ENCODE measurements at regions of chr15 and their contacts with region 1.

Region 1: GRCh38 chr15:57861036-57861638 is 154.6 kb downstream of the POLR2M start:
- DNase-seq: peak; percentile 28 to 74
- ATAC-seq: peak; percentile 28 to 78; a peak in 3 of 6 replicates
- H3K4me3 ChIP-seq: no peak overlapping the region
- H3K27ac ChIP-seq: no peak overlapping the region
- H3K4me1 ChIP-seq: no peaks in the 10 kb centered on the region
- CTCF ChIP-seq: peak; percentile 94
- EP300 ChIP-seq: no peak
- POLR2A ChIP-seq: no peak
- RAD21 ChIP-seq: peak; percentile 63 to 73

Region 2: GRCh38 chr15:57580866-57581265 is 280.3 kb before region 1 on chr15:
- CTCF ChIA-PET with region 1: no interaction called
- POLR2A ChIA-PET with region 1: no interaction called
- DNase-seq: no peak
- ATAC-seq: peak in 1 of 2 experiments; percentile 60; a peak in 2 of 6 replicates
- H3K4me3 ChIP-seq: no peak overlapping the region
- H3K27ac ChIP-seq: no peak overlapping the region
- H3K4me1 ChIP-seq: no peaks in the 10 kb centered on the region
- CTCF ChIP-seq: no peak
- EP300 ChIP-seq: no peak
- POLR2A ChIP-seq: no peak
- RAD21 ChIP-seq: no peak

Region 3: GRCh38 chr15:57732526-57733331 is 128.4 kb before region 1 on chr15:
- CTCF ChIA-PET with region 1: interaction called, 14 read pairs
- POLR2A ChIA-PET with region 1: no interaction called
- DNase-seq: peak; percentile 46 to 64
- ATAC-seq: peak; percentile 81 to 93
- H3K4me3 ChIP-seq: no peak overlapping the region
- H3K27ac ChIP-seq: no peak overlapping the region
- H3K4me1 ChIP-seq: no peaks in the 10 kb centered on the region
- CTCF ChIP-seq: peak; percentile 94
- EP300 ChIP-seq: no peak
- POLR2A ChIP-seq: no peak
- RAD21 ChIP-seq: peak; percentile 57 to 61

Region 4: DNA sequence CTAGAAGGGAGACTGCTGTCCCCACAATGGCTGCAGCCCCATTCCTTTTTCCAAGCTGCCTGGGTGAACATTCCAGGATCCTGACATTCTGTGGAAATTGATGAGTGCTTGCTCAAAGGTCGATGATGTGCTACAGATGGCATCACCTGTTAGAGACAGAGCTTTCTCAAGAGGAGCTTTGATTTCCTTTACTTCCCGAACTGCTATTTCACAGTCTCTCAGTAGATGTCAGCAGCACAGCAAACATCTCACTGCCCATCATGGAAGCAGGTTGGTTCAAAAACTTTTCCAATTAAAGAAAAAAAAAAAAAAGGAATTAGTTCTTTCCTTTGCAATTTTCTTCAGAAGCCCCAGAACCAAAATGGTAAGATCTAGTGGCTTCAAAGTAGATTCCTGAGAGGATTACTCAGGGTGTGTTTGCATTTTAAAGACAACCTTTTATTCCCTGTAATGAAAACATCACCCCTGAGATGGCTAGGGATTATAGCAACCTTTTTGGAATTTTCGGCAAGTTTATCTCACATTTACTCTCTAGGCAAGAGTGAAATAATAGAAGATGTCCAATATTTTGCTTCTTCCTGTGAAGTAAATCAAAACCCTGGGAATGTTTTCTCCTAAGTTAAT is 109.8 kb before region 1 on chr15:
- CTCF ChIA-PET with region 1: interaction called, 126 read pairs
- POLR2A ChIA-PET with region 1: no interaction called
- DNase-seq: peak; percentile 29 to 50
- ATAC-seq: peak; percentile 65 to 85; a peak in 4 of 6 replicates
- H3K4me3 ChIP-seq: no peak overlapping the region
- H3K27ac ChIP-seq: no peak overlapping the region
- H3K4me1 ChIP-seq: no peaks in the 10 kb centered on the region
- CTCF ChIP-seq: peak; percentile 63
- EP300 ChIP-seq: no peak
- POLR2A ChIP-seq: no peak
- RAD21 ChIP-seq: peak; percentile 71 to 76

Region 5: DNA sequence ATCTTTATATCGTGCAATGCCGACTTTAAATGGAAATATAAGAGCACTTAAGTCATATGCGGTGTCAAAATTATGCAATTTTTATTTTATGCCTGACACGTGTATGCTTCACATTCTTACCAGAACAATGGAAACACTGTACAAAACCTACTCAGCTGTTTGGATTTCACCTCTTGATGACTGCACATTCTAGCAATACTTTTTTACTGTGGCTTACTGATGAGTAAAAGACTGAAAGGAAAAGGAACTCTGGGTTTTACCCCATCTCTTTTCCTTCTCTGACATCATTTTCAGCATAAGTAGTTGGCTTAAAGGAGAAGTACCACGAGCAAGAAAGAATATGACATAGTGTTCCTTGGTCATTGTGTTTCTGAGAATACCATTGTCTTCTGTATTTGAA is 11.8 kb before region 1 on chr15:
- CTCF ChIA-PET with region 1: interaction called, 47 read pairs
- POLR2A ChIA-PET with region 1: no interaction called
- DNase-seq: no peak
- ATAC-seq: no peak
- H3K4me3 ChIP-seq: no peak overlapping the region
- H3K27ac ChIP-seq: no peak overlapping the region
- H3K4me1 ChIP-seq: no peaks in the 10 kb centered on the region
- CTCF ChIP-seq: no peak
- EP300 ChIP-seq: no peak
- POLR2A ChIP-seq: no peak
- RAD21 ChIP-seq: no peak

Region 6: DNA sequence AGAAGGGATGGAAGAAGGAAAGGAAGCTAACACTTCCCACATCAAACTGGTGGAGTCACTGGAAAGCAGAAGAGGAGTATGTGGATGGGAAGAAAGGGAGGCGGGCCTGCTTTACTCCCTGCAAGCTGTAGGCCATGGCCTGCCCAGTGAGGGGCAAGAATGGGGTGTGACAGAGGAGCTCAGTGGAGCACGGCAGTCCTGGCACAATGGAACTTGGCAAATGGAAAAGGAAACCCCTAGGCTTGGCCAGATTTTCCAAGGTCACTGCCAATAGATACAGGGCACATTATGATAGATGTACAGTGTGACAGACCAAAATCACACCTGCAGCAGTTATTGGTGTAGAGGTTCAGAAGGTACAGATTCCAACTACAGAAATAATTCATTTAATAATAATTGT is 92.7 kb after region 1 on chr15:
- CTCF ChIA-PET with region 1: interaction called, 13 read pairs
- POLR2A ChIA-PET with region 1: no interaction called
- DNase-seq: no peak
- ATAC-seq: no peak
- H3K4me3 ChIP-seq: no peak overlapping the region
- H3K27ac ChIP-seq: no peak overlapping the region
- H3K4me1 ChIP-seq: no peaks in the 10 kb centered on the region
- CTCF ChIP-seq: no peak
- EP300 ChIP-seq: no peak
- POLR2A ChIP-seq: no peak; the same call in 1 of the 2 replicates
- RAD21 ChIP-seq: no peak